MCF 10A (cell line): ENCODE measurements at regions of chr11 and their contacts with region 1.

Region 1: GRCh38 chr11:27485930-27486773 is 13.6 kb upstream of the LGR4 start:
- DNase-seq: peak; percentile 71
- H3K4me3 Mint-ChIP-seq: no peak overlapping the region
- H3K27ac Mint-ChIP-seq: no peak overlapping the region
- H3K4me1 Mint-ChIP-seq: no peaks in the 10 kb centered on the region
- H3K27me3 Mint-ChIP-seq: no peaks in the 10 kb centered on the region
- CTCF ChIP-seq: peak; percentile 88

Region 2: GRCh38 chr11:26753723-26754504 is 732.2 kb before region 1 on chr11:
- CTCF ChIA-PET with region 1: no interaction called
- POLR2A ChIA-PET with region 1: no interaction called
- intact Hi-C with region 1: loop called (anchors 5 kb)
- DNase-seq: peak; percentile 75
- H3K4me3 Mint-ChIP-seq: no peak overlapping the region
- H3K27ac Mint-ChIP-seq: no peak overlapping the region
- H3K4me1 Mint-ChIP-seq: no peaks in the 10 kb centered on the region
- H3K27me3 Mint-ChIP-seq: no peaks in the 10 kb centered on the region
- CTCF ChIP-seq: peak; percentile 84

Region 3: GRCh38 chr11:26767060-26767459 is 719.1 kb before region 1 on chr11:
- CTCF ChIA-PET with region 1: no interaction called
- POLR2A ChIA-PET with region 1: no interaction called
- intact Hi-C with region 1: no loop called
- DNase-seq: no peak
- H3K4me3 Mint-ChIP-seq: no peak overlapping the region
- H3K27ac Mint-ChIP-seq: no peak overlapping the region
- H3K4me1 Mint-ChIP-seq: no peaks in the 10 kb centered on the region
- H3K27me3 Mint-ChIP-seq: no peaks in the 10 kb centered on the region
- CTCF ChIP-seq: no peak

Region 4: GRCh38 chr11:27183672-27184457 is 302.3 kb before region 1 on chr11:
- CTCF ChIA-PET with region 1: interaction called, 121 read pairs
- POLR2A ChIA-PET with region 1: interaction called, 12 read pairs
- intact Hi-C with region 1: loop called (anchors 1 kb)
- DNase-seq: peak; percentile 72
- H3K4me3 Mint-ChIP-seq: no peak overlapping the region
- H3K27ac Mint-ChIP-seq: no peak overlapping the region
- H3K4me1 Mint-ChIP-seq: no peaks in the 10 kb centered on the region
- H3K27me3 Mint-ChIP-seq: peaks cover 27% of the 10 kb centered on the region
- CTCF ChIP-seq: peak; percentile 78

Region 5: DNA sequence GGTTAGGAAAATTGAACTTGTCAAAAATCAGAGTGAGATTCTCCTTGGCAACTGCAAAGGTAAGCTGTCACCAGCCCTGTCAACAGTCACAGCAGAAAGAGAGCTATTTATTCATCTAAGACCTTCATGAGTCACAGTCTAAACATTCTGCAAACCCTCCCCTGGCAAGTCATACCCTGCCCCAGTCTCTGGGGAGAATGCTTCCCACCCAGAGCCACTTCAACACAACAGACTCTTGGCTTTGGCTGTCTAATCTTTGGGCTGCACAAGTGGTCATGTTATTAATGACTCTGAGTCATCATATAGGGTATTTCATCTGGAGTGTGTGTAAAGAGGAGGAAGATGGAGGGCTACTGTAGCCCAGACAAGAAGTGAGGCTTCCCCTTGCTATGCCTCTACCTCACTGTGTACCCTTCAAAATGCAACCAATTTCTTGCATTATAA is 276.6 kb before region 1 on chr11:
- CTCF ChIA-PET with region 1: interaction called, 16 read pairs
- POLR2A ChIA-PET with region 1: no interaction called
- intact Hi-C with region 1: loop called (anchors 5 kb)
- DNase-seq: peak; percentile 94
- H3K4me3 Mint-ChIP-seq: no peak overlapping the region
- H3K27ac Mint-ChIP-seq: peak overlapping the region; percentile 74
- H3K4me1 Mint-ChIP-seq: peaks cover 37% of the 10 kb centered on the region
- H3K27me3 Mint-ChIP-seq: no peaks in the 10 kb centered on the region
- CTCF ChIP-seq: no peak

Region 6: GRCh38 chr11:27296497-27296896 is 189.7 kb before region 1 on chr11:
- CTCF ChIA-PET with region 1: interaction called, 56 read pairs
- POLR2A ChIA-PET with region 1: interaction called, 3 read pairs
- intact Hi-C with region 1: loop called (anchors 1 kb)
- DNase-seq: peak; percentile 69
- H3K4me3 Mint-ChIP-seq: no peak overlapping the region
- H3K27ac Mint-ChIP-seq: no peak overlapping the region
- H3K4me1 Mint-ChIP-seq: peaks cover 3% of the 10 kb centered on the region
- H3K27me3 Mint-ChIP-seq: no peaks in the 10 kb centered on the region
- CTCF ChIP-seq: peak; percentile 56

Region 7: DNA sequence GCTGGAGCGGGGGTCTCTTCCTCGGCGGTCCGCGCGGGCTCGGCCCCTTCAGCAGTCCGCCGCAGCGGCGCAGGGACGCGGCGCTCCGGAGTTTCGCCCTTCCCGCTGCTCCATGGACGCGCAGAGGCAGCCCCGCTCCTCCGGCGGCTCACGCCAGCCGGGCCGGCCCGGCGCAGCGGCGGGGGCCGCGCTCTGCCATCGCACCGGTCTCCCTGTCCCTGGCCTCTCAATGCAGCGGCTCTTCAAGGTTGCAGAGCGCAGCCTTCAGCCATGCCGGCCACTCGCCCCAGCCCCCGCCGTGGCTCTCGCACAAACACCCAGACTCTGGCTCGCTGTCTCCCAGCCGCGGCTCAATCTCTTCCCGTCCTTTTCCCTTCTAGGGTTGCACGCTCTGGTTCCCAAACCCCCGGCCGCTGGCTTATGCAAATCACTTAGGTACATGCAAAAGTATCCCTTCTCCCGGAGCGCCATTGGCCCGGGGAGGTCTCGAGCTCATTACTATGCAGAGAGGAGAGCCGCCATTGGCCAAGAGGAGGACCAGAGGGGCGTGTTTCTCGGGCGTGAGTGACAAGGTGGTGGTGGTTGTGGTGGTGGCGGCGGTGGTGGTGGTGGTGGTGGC is 13.6 kb before region 1 on chr11 and contains the start of gene LGR4:
- CTCF ChIA-PET with region 1: interaction called, 38 read pairs
- POLR2A ChIA-PET with region 1: interaction called, 15 read pairs
- intact Hi-C with region 1: no loop called
- DNase-seq: peak; percentile 98
- H3K4me3 Mint-ChIP-seq: peak within 1 kb of the TSS; percentile 79
- H3K27ac Mint-ChIP-seq: peak within 1 kb of the TSS; percentile 79
- H3K4me1 Mint-ChIP-seq: peaks cover 31% of the 10 kb centered on the region
- H3K27me3 Mint-ChIP-seq: no peaks in the 10 kb centered on the region
- CTCF ChIP-seq: no peak
- total RNA-seq, gene LGR4: 14.2 and 14.8 TPM in 2 replicates

Region 8: DNA sequence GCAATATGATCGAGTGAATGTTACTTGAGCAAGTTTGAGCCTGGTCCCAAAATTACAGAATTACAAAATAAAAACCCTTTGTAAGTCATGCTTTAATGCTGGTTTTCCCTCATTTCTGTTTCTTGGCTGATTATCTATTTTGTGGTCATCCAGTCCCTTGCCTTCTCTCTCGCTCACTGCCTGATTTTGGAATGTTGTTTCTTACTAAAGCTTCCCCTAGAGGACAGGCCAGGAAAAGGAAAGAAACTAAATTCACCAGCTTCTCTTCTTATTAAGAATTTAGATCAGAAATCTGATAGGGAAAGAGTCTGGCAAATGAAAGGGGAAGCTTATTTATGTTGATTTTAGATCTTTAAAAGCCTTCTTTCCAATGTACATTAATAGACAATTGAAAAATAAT is 230.7 kb after region 1 on chr11:
- CTCF ChIA-PET with region 1: no interaction called
- POLR2A ChIA-PET with region 1: no interaction called
- intact Hi-C with region 1: no loop called
- DNase-seq: no peak
- H3K4me3 Mint-ChIP-seq: no peak overlapping the region
- H3K27ac Mint-ChIP-seq: no peak overlapping the region
- H3K4me1 Mint-ChIP-seq: peaks cover 14% of the 10 kb centered on the region
- H3K27me3 Mint-ChIP-seq: no peaks in the 10 kb centered on the region
- CTCF ChIP-seq: no peak